Transverse colon (tissue), 4 donors: ENCODE measurements at regions of chr1 and their contacts with region 1.

Region 1: DNA sequence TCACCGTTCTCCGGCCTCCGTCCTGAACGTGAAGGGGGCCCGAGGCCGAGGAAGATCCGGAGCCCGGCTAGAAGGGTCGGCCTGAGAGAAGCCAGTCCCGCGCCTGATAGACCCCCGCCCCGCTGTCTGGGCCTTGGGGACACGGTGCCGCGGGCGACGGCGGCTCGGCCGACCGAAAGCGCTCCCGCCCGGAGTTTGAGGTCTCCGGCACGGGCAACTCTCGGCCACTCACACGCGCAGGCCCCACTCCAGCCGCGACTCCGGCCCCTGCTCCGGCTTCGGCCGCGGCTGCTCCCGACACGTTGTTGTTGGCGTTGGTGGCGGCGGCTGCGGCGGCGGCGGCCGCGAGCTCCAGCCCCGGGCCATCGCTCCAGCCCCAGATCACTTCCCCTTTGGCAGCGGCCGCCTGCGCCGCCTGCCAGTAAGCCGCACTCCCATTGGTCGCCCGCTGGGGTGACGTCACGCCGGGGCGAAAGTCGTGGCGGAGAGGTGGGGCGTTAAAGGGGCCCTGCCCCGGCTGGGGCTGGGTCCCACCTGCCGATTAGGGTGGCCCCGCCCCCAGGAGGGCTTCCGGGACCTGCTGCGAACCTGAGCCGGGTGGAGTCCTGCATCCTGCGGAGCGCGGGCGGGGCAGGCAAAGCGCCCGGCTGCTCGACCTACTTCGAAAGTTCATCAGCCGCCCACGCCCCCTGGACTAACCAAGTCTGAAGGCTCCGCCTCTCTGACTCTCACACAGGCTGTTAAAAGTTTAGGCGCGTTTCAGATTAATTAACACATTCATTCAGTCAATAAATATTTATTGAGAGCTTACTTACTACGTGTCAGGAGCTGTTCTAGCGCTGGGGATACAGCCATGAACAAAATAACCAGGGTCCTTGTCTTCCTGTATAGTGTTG is at the start of gene EFCAB14:
- DNase-seq: peak; percentile 99
- H3K4me3 ChIP-seq: peak within 1 kb of the TSS; percentile 78 to 98 (median 92)
- H3K27ac ChIP-seq: peak within 1 kb of the TSS; percentile 87 to 92 (median 89)
- H3K4me1 ChIP-seq: peaks cover 18 to 37% (median 23%) of the 10 kb centered on the region in 4 donors
- H3K27me3 ChIP-seq: no peaks in the 10 kb centered on the region
- CTCF ChIP-seq: no peak
- EP300 ChIP-seq: no peak
- POLR2A ChIP-seq: peak; percentile 91
- total RNA-seq, gene EFCAB14: 48.2 to 119 (median 85.4) TPM

Region 2: DNA sequence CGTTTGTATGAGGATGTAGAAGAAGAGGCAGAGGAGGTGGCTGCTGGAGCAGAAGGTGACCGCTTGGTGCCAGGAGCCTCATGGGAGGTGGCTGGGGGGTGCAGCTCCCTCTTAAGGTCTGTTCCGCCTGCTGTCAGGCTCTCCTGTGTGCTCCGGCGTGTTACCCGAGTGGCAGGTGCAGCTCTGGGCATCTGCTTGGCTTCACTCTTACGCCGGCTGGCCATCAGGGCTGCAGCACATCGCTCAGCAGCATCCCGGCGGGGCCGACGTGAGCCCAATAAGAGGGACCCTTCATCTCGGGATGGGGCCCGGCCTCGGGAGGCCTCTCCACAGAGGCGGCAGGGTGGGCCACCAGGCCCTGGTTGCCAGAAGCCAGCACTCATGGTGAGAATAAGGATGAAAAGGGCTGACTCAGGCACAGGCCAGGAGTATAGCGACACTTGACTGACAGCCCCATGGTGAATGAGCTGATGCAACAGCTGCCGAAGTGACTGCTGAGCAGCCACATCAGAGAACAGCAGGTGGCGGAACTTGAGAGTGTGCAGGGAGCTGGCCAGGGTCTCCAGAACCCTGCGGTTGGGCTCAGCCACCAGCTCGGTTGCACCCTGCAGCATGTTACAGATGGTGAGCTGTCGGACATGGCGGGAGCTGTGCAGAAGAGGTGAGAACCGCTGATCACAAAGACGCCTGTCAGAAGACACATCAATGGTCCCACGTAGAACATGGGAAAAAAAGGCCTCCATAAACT is 433.1 kb before region 1 on chr1:
- in situ Hi-C with region 1: no loop called
- intact Hi-C with region 1: no loop called
- DNase-seq: no peak
- H3K4me3 ChIP-seq: no peak overlapping the region
- H3K27ac ChIP-seq: no peak overlapping the region
- H3K4me1 ChIP-seq: no peaks in the 10 kb centered on the region
- H3K27me3 ChIP-seq: no peaks in the 10 kb centered on the region
- CTCF ChIP-seq: no peak
- EP300 ChIP-seq: no peak
- POLR2A ChIP-seq: no peak

Region 3: DNA sequence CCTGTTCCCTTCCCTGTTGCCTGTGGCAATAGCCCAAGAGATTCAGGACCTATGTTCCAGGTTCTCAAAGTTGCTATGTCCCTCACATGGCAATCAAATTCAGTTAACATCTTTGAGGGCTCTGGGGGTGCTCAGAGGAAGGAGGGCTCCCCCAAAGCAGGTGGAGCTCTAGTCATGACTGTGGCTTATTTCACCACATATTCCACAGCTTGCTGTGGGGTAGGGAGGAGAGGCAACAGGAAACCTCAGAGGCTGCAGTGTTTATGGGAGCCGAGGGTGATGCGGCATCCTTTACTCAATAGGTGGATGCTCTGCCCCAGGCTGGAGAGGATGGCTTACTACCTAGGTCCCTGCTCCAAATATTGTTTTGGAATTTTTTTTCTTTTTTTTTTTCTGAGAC is 113.7 kb before region 1 on chr1:
- in situ Hi-C with region 1: loop called in 2 of 4 experiments (anchors 10 kb)
- intact Hi-C with region 1: loop called (anchors 5 kb)
- DNase-seq: no peak
- H3K4me3 ChIP-seq: no peak overlapping the region
- H3K27ac ChIP-seq: no peak overlapping the region
- H3K4me1 ChIP-seq: peaks cover 8 to 37% (median 19%) of the 10 kb centered on the region in 4 donors
- H3K27me3 ChIP-seq: no peaks in the 10 kb centered on the region
- CTCF ChIP-seq: no peak
- EP300 ChIP-seq: no peak
- POLR2A ChIP-seq: no peak

Region 4: DNA sequence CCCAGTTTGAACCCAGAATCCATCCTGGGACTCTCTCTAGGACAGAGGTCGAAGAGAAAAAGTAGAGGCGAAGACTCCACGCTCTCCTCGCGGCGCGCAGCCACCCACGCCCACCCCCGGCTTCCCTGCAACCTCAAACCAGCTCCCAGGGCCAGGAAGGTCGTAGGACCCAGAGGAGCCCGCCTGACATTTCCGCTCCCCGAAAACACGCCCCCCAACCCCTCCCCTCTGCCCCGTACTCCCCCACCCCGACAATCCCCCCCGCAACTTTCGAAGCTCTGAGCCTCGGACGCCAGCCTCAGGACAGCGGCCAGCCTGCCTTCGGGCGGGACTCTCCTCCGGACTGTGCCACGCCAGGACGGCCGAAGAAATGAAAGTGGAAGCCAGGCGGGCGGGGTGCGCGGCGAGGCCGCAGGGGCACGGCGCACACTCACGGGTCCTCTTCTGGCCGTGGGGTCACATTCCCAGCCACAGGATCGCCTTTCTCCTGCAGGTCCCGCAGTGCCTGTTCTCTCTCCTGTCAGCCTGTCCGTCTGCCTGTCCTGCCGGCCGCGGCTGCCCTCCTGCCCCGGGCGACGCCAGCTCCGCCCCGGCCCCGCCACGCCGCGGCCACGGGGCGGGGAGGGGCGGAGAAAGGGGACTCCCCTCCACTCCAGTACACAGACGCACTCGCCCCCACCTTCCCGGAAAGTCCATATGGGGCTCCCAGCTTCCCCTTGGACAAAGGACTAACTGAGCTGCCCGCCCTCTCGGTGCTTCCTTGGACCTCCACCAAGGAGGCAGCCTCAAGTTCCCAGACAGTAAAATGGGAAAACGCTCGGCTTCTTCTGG is 102.5 kb before region 1 on chr1 and contains the start of gene MOB3C:
- in situ Hi-C with region 1: loop called in 3 of 4 experiments (anchors 10 kb)
- intact Hi-C with region 1: no loop called
- DNase-seq: peak; percentile 85
- H3K4me3 ChIP-seq: peak within 1 kb of the TSS; percentile 63 to 88 (median 81)
- H3K27ac ChIP-seq: peak within 1 kb of the TSS; percentile 90 to 97 (median 94)
- H3K4me1 ChIP-seq: peaks cover 31 to 50% (median 43%) of the 10 kb centered on the region in 4 donors
- H3K27me3 ChIP-seq: no peaks in the 10 kb centered on the region
- CTCF ChIP-seq: no peak
- EP300 ChIP-seq: no peak
- POLR2A ChIP-seq: peak; percentile 54
- total RNA-seq, gene MOB3C: 12.9 to 20.6 (median 14.8) TPM